Heart left ventricle (tissue), 16 donors: ENCODE measurements at regions of chr3 and their contacts with region 1.

Region 1: DNA sequence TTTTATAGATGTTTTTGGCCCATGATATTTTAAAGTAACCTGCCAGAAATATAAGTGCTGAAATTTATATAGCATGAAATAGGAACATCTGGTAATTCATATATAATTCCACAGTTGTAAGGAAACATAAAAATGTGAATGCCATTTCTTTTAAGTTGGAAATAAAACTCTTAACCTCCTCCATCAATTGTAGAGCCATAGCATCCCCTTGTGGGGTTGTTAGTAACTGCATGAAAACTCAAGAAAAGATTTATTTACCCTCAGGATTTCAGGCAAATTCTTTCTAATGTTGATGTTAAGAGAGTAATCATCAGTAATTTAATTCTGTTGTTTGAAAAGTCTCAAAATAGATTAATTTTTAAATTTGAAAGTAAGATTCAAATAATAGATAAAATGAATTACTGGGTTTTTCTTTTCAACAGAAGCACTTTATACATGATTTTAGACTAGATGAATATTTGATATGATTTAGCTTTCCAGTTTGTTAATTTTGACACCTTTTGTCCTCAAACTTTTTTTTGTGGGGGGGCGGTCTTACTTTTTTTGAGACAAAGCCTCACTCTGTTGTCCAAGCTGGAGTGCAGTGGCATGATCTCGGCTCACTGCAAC is 74.7 kb downstream of the RASA2 start:
- DNase-seq: peak in 2 of 5 donors; percentile 22 to 24
- ATAC-seq: peak in 1 of 4 donors; percentile 41
- H3K4me3 ChIP-seq: no peak overlapping the region
- H3K27ac ChIP-seq: no peak overlapping the region
- H3K4me1 ChIP-seq: peaks cover 0 to 18% (median 0%) of the 10 kb centered on the region in 12 donors
- H3K27me3 ChIP-seq: no peaks in the 10 kb centered on the region
- CTCF ChIP-seq: peak; percentile 89 to 100 (median 96)
- POLR2A ChIP-seq: no peak

Region 2: DNA sequence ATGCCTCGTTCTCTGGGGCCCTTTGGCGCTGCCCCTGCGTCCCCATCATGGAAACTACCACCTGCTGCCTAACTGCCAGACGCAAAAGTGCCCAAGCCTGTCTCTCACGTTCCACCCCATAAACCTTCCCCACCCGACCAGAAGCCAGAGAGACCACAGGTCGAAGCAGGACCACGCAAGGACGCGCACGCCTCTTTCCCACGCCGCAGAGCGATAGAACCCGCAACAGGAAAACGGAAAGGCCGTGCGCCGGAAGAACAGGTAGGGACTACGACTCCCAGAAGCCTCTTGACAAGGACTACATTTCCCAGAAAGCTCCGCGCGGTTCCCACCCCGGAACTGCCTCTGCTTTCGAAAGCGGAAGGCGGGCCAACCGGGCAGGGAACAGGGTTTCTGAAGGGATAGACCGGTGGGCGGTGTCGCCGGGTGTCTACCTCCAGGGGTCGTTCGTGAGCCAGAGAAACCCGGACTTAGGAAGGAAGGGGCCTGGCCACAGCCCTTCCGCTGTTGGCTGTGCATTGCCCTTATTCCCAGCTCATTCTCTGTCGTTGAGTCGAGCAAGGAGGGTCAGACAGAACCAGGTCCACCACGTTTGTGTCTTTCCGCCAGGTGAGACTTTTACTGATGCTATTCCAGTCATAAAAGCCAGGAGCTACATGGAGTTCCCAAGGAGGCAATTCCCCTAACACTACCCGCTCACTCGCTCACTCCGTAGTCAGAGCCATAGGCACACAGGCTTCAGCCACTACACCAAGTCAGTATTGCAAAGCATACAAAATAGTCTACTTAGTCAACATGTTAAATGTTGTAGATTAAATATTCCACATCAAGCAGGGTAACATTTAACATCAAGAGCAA is 249.8 kb before region 1 on chr3:
- intact Hi-C with region 1: loop called in 7 of 10 experiments (anchors 5 to 10 kb)
- DNase-seq: peak; percentile 98 to 99 (median 99)
- ATAC-seq: peak; percentile 97 to 99 (median 98)
- H3K4me3 ChIP-seq: peak overlapping the region; percentile 28 to 85 (median 70)
- H3K27ac ChIP-seq: peak overlapping the region; percentile 1 to 90 (median 80)
- H3K4me1 ChIP-seq: peaks cover 0 to 29% (median 11%) of the 10 kb centered on the region in 12 donors
- H3K27me3 ChIP-seq: no peaks in the 10 kb centered on the region
- CTCF ChIP-seq: peak; percentile 69 to 92 (median 84)
- POLR2A ChIP-seq: peak in 1 of 2 donors; percentile 74

Region 3: DNA sequence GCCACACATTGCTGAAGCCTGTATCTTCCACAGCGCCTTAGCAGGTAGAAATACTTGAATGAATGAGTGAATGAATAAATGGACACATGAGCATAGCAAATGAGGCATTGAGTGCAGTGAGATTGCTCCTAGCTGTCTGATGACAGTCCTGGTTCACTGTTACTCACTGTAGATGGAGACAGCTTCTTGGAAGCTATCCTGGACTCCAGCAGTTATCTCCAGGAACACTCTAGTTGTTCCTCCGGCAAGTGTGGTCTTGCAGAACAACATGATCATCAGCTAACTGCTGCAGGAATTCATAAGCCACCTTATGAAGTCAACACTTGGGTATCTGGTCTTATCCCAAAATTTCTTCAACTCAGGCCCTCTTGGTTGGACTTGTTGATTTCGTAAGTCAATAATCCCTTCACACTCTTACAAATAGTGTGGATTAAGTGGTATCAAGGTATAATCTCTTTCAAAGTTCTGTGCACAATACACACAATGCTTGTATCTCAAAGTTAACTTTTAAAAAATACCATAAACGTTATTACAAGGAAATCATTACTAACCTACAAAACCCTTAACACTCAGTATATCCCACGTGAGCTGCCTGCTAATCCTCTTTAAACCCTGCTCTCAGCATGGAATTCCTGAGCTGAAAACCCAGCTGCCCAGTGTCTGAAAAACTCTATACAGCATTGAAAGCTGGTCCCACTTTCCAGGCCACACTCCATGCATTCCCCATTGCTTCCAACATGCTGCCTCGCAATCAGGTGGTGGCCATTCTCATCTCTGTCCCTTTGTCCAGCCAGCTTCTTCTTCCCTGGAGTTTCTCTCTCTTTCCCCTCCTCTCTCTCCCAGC is 207.7 kb before region 1 on chr3:
- intact Hi-C with region 1: loop called in 3 of 10 experiments (anchors 5 to 10 kb)
- DNase-seq: no peak
- ATAC-seq: peak in 3 of 4 donors; percentile 52 to 88 (median 69)
- H3K4me3 ChIP-seq: no peak overlapping the region
- H3K27ac ChIP-seq: no peak overlapping the region
- H3K4me1 ChIP-seq: no peaks in the 10 kb centered on the region
- H3K27me3 ChIP-seq: no peaks in the 10 kb centered on the region
- CTCF ChIP-seq: no peak
- POLR2A ChIP-seq: no peak

Region 4: GRCh38 chr3:141452036-141452435 is 109.5 kb before region 1 on chr3:
- intact Hi-C with region 1: loop called in 1 of 10 experiments (anchors 5 kb)
- DNase-seq: no peak
- ATAC-seq: peak; percentile 67 to 78 (median 72)
- H3K4me3 ChIP-seq: no peak overlapping the region
- H3K27ac ChIP-seq: peak overlapping the region in 5 of 12 donors; percentile 17 to 66 (median 19)
- H3K4me1 ChIP-seq: peaks cover 0 to 60% (median 29%) of the 10 kb centered on the region in 12 donors
- H3K27me3 ChIP-seq: no peaks in the 10 kb centered on the region
- CTCF ChIP-seq: peak; percentile 55 to 89 (median 76)
- POLR2A ChIP-seq: no peak

Region 5: GRCh38 chr3:141477224-141477623 is 84.3 kb before region 1 on chr3:
- intact Hi-C with region 1: loop called in 7 of 10 experiments (anchors 1 to 5 kb)
- DNase-seq: no peak
- ATAC-seq: no peak
- H3K4me3 ChIP-seq: no peak overlapping the region
- H3K27ac ChIP-seq: no peak overlapping the region
- H3K4me1 ChIP-seq: peaks cover 0 to 19% (median 0%) of the 10 kb centered on the region in 12 donors
- H3K27me3 ChIP-seq: no peaks in the 10 kb centered on the region
- CTCF ChIP-seq: no peak
- POLR2A ChIP-seq: no peak

Region 6: DNA sequence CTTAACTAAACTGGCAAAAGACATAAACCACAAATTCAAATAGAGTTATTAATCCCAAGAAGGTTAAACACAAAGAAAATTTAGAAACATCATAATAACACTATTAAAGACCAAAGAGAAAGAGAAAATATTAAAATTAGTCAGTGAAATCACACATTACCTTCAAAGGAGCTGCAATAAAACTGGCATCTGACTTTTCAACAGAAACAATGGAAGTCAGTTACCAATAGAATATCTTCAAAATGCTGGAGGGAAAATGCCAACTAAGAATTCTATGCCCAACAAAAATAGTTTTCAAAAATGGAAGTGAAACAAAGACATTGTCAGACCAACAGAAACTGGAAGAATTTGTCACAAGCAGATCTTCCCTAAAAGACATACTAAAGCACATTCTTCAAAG is 107.9 kb after region 1 on chr3:
- intact Hi-C with region 1: no loop called
- DNase-seq: no peak
- ATAC-seq: no peak
- H3K4me3 ChIP-seq: no peak overlapping the region
- H3K27ac ChIP-seq: no peak overlapping the region
- H3K4me1 ChIP-seq: no peaks in the 10 kb centered on the region
- H3K27me3 ChIP-seq: no peaks in the 10 kb centered on the region
- CTCF ChIP-seq: no peak
- POLR2A ChIP-seq: no peak